Posterior vena cava (tissue), 2 donors: ENCODE measurements at regions of chr14 and their contacts with region 1.

Region 1: DNA sequence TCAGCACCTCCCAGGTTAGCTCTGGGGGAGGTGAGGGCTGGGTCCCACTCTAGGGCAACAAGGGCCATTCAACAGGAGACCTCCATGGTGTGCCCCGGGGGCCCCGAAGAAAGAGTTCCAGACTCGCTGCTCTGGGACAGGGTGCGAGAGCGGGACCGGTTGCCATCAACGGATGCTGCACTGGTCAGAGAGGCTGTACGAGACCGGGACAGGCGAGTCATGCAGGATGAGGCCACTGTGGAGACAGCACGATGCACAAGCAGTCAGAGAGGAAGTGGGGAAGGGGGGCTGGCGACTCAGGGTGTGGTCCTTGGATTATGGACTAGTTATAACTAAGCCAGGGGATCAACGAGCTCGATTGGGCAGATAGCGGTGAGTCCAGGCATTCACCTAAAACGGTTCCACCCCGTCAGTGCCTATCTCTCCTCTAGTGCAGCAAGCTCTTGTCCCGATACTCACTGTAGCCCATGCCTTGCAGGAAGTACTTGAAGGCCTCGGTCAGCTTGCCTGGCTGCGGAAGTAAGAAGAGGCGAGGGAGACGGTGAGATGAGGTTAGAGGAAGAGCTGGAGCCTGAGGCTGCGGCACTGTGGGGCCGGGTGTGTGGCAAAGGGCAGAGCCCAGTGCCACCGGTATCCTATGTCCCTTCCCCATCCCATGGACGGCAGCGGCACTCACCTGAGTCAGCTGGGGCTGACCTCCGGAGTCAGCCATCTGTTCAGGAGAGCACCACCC is 7.2 kb downstream of the NDRG2 start:
- DNase-seq: no peak

Region 2: GRCh38 chr14:21039585-21040369 is 22.1 kb after region 1 on chr14:
- intact Hi-C with region 1: loop called in 1 of 2 experiments (anchors 2 kb)
- DNase-seq: no peak

Region 3: DNA sequence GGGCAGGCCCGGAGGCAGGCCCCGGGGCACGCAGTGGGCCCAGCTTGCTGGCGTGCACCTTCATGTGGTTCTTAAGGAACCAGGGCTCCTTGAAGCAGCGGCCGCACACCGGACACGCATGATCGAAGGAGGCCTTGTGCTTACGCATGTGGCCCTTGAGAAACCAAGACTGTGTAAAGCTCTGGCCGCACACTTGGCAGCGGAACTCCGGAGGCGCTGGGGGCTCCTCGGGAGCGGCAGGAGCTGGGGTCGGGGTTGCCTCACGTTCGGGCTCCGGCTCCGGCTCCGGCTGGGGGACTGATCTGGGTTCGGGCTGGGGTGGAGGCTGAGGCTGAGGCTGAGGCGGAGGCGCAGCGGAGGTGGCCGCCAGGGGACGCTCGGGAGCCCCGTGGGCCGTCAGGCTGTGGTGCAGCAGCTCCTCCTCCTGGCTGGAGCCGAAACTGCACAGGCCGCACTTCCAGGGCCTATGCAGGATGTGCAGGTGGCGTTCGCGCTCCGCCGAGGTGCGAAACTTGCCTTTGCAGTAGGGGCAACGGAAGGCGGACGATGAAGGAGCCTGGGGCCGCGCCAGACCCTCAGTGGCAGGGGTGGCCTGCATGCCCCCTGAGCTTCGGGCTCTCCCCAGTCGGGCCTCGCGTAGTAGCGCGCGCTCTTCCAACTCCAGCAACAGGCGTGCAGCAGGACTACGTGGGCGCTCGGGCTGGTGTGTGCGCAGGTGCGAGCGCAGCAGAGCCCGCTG is 74.7 kb after region 1 on chr14:
- intact Hi-C with region 1: loop called (anchors 2 to 5 kb)
- DNase-seq: peak; percentile 97

Region 4: DNA sequence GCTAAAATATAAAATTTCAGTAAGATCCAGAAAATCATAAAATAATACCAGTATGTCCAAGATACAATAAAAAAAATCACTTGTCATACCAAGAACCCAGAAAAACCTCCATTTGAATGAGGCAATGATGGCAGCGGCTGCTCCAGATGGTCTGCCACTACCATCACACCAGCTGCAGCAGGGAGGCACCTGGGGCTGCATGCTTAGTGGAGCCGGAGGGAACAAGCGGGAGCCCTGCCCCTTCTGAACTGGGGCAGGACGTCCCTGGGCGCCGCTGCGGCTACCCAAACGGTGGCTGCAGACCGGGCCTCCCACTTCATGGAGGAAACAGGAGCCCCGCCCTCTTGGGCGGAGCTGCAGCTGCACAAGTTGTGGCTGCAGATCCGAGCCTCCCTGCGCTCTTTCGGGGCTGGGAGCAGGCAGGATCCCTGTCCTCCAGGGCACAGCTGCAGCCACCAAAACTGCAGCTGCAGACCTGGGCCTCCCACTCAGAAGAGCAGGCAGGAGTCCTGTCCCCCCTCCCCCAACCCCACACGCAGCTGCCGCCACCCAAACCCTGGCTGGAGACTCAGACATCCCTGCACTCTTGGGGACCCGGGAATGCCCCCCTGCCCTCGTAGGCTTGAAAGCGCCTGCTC is 174.2 kb after region 1 on chr14:
- intact Hi-C with region 1: no loop called
- DNase-seq: peak; percentile 87